Sciatic nerve (tissue), 2 donors: ENCODE measurements at regions of chr12 and their contacts with region 1.

Region 1: DNA sequence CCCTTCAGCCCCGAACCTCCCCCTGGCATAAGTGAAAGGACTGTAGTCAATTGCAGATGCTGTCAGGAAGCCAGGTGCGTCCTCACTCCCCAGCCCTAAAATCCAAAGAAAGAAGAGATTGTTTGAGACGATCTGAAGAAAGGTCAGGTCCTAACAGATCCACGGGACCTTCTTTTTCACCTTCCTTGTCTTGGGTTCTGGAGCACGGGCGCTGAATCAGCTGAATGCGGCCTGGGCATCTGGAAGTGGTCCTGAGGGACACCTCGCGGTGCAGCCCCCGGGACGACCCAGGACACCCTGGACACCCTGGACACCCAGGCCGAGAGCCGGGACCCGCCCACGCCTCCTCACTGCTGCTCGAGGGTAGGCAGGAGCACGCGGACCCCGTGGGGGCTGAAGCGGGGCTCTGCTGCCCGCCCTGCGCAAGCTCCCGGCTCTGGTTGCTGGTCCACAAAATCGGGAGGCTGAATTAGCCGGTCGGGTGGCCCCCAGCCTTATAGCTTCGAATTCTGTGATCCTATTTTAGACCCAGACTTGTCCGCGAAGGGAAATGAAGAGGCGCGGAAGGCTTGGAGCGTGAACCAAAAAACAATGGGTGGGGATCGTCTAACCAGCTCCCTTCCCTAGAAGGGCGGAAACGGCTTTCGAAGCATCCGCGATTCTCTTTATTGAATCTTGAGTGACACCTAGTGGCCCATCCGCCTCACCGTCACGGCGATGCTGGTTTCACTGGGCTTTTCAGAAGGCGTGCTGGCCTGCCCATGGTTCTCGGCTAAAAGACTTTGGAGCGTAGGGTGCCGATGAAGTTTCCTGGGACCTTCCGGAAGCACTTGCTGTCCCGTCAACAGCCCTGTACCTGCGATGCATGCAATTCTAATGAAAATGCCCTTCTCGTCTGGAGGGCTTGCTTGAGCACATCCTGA is 46.4 kb upstream of the PLXNC1 start:
- DNase-seq: peak; percentile 91
- ATAC-seq: peak; percentile 89

Region 2: DNA sequence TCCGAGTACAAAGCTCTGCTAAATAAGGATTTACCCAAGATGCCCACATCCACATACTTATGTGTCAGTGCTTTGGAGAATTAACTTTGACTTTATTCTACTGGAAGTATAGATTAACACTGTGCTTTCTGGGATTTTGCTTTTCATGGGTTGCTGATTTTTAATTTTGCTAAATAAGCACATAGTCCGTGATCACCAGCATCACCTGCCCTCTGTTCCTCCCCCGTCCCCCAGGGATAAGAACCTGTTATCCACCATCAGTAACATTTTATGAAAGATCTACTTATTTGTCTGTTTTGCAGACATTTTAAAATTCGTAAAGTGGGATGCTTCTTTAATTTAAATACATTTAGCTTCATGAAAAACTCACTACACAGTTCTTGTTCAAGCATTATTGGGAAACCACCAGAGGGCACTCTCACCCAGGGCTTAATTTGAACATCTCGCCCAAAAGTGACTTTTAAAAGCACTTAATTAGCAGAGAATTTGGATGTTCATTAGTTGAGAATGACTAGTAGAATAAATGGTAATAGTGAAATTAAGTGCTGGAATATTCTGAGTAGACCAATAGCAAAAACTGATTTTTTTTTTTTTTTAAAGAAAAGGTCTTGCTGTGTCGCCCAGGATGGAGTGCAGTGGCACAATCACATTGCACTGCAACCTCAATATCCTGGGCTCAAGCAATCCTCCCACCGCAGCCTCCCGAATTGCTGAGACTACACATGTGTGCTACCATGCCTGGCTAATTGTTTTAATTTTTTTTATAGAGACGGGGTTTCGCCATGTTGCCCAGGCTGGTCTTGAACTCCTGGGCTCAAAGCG is 599.0 kb before region 1 on chr12:
- intact Hi-C with region 1: loop called (anchors 5 kb)
- DNase-seq: peak; percentile 66
- ATAC-seq: no peak

Region 3: GRCh38 chr12:93569656-93570551 is 532.1 kb before region 1 on chr12:
- intact Hi-C with region 1: loop called (anchors 5 kb)
- DNase-seq: peak; percentile 92
- ATAC-seq: peak; percentile 83

Region 4: GRCh38 chr12:93766796-93767523 is 335.0 kb before region 1 on chr12:
- intact Hi-C with region 1: loop called (anchors 10 kb)
- DNase-seq: no peak
- ATAC-seq: peak; percentile 92